AG04450 (cell line): ENCODE measurements at regions of chr21 and their contacts with region 1.

Region 1: DNA sequence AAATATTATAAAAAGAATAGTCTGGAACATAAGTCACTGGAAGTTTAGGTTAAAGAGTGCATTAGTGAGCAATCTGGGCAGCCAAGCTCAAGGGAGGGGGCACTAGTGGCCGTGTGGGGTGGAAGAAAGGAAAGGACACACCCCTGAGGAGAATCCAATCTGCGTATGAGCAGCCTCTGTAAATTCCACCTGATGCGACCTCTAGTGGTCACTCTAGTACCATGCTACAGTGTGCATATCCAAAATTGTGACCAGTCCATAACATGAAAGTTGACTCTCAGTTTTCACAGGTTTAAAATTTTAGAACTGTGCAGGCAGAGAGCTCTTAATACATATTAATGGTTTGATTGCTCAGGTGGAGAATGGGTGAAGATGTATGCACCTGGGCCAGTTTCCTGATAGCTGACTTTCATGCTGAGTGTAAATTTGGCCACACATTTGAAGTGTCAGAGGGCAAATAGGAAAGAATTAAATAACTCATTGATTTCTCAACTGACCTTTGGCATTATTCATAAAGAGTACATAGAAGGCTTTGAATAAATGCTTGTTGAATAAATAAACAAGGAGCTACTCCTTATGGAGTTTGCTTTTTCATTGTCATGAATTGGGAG is 105.9 kb upstream of the C21orf91 start:
- DNase-seq: peak; percentile 6
- H3K4me3 ChIP-seq: no peak overlapping the region
- H3K27ac ChIP-seq: no peak overlapping the region
- H3K27me3 ChIP-seq: no peaks in the 10 kb centered on the region
- CTCF ChIP-seq: peak; percentile 93

Region 2: GRCh38 chr21:17479606-17480005 is 445.5 kb before region 1 on chr21:
- CTCF ChIA-PET with region 1: no interaction called
- POLR2A ChIA-PET with region 1: no interaction called
- DNase-seq: no peak
- H3K4me3 ChIP-seq: no peak overlapping the region
- H3K27ac ChIP-seq: no peak overlapping the region
- H3K27me3 ChIP-seq: no peaks in the 10 kb centered on the region
- CTCF ChIP-seq: no peak

Region 3: GRCh38 chr21:17673261-17674010 is 251.7 kb before region 1 on chr21:
- CTCF ChIA-PET with region 1: interaction called, 118 read pairs
- POLR2A ChIA-PET with region 1: no interaction called
- DNase-seq: no peak
- H3K4me3 ChIP-seq: no peak overlapping the region
- H3K27ac ChIP-seq: no peak overlapping the region
- H3K27me3 ChIP-seq: no peaks in the 10 kb centered on the region
- CTCF ChIP-seq: no peak

Region 4: DNA sequence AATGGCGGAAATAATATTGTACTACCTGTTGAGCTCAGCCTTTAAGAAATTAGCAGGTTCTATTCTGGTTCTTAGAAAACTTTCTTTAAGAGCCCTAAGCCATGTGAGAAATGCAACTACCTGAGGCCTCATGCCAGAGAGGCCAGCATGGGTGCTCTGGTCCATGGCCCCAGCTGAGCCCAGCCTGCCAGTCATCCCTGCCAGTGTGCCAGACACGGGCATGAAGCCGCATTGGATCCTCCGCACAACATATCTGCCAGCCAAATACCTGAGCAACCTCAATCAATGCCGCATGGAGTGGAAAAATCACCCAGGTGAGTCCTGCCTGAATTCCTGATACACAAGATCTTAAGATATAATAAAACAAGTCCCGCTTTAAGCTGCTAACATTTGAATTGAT is 197.7 kb before region 1 on chr21:
- CTCF ChIA-PET with region 1: interaction called, 14 read pairs
- POLR2A ChIA-PET with region 1: no interaction called
- DNase-seq: no peak
- H3K4me3 ChIP-seq: no peak overlapping the region
- H3K27ac ChIP-seq: no peak overlapping the region
- H3K27me3 ChIP-seq: no peaks in the 10 kb centered on the region
- CTCF ChIP-seq: no peak

Region 5: GRCh38 chr21:17819114-17819876 is 105.8 kb before region 1 on chr21 and contains the start of gene C21orf91:
- CTCF ChIA-PET with region 1: interaction called, 19 read pairs
- POLR2A ChIA-PET with region 1: no interaction called
- DNase-seq: peak; percentile 81
- H3K4me3 ChIP-seq: peak within 1 kb of the TSS; percentile 81
- H3K27ac ChIP-seq: peak within 1 kb of the TSS; percentile 63
- H3K27me3 ChIP-seq: no peaks in the 10 kb centered on the region
- CTCF ChIP-seq: no peak
- polyA plus RNA-seq, gene C21orf91: 11.2 and 17.5 TPM in 2 replicates

Region 6: GRCh38 chr21:17903029-17903806 is 21.9 kb before region 1 on chr21:
- CTCF ChIA-PET with region 1: interaction called, 15 read pairs
- POLR2A ChIA-PET with region 1: no interaction called
- DNase-seq: peak; percentile 20
- H3K4me3 ChIP-seq: no peak overlapping the region
- H3K27ac ChIP-seq: no peak overlapping the region
- H3K27me3 ChIP-seq: no peaks in the 10 kb centered on the region
- CTCF ChIP-seq: peak; percentile 19

Region 7: GRCh38 chr21:17949421-17949820 is 24.3 kb after region 1 on chr21:
- CTCF ChIA-PET with region 1: interaction called, 15 read pairs
- POLR2A ChIA-PET with region 1: no interaction called
- DNase-seq: no peak
- H3K4me3 ChIP-seq: no peak overlapping the region
- H3K27ac ChIP-seq: no peak overlapping the region
- H3K27me3 ChIP-seq: no peaks in the 10 kb centered on the region
- CTCF ChIP-seq: no peak

Region 8: GRCh38 chr21:18023157-18023556 is 98.1 kb after region 1 on chr21:
- CTCF ChIA-PET with region 1: no interaction called
- POLR2A ChIA-PET with region 1: no interaction called
- DNase-seq: no peak
- H3K4me3 ChIP-seq: no peak overlapping the region
- H3K27ac ChIP-seq: no peak overlapping the region
- H3K27me3 ChIP-seq: no peaks in the 10 kb centered on the region
- CTCF ChIP-seq: no peak

Region 9: GRCh38 chr21:18153063-18153462 is 228.0 kb after region 1 on chr21:
- CTCF ChIA-PET with region 1: no interaction called
- POLR2A ChIA-PET with region 1: no interaction called
- DNase-seq: no peak
- H3K4me3 ChIP-seq: no peak overlapping the region
- H3K27ac ChIP-seq: no peak overlapping the region
- H3K27me3 ChIP-seq: no peaks in the 10 kb centered on the region
- CTCF ChIP-seq: no peak

Region 10: GRCh38 chr21:18204931-18205330 is 279.8 kb after region 1 on chr21:
- CTCF ChIA-PET with region 1: no interaction called
- POLR2A ChIA-PET with region 1: no interaction called
- DNase-seq: no peak
- H3K4me3 ChIP-seq: no peak overlapping the region
- H3K27ac ChIP-seq: no peak overlapping the region
- H3K27me3 ChIP-seq: no peaks in the 10 kb centered on the region
- CTCF ChIP-seq: no peak